Dorsolateral prefrontal cortex (tissue), 120 donors: ENCODE measurements at regions of chr13 and their contacts with region 1.

Region 1: GRCh38 chr13:46698910-46699460 is 98.0 kb downstream of the ESD start:
- DNase-seq: no peak
- H3K4me3 ChIP-seq: no peak overlapping the region
- H3K27ac ChIP-seq: no peak overlapping the region
- H3K27me3 ChIP-seq: no peaks in the 10 kb centered on the region
- CTCF ChIP-seq: no peak

Region 2: GRCh38 chr13:45941261-45941660 is 757.7 kb before region 1 on chr13:
- intact Hi-C with region 1: no loop called
- DNase-seq: no peak
- H3K4me3 ChIP-seq: no peak overlapping the region
- H3K27ac ChIP-seq: no peak overlapping the region
- H3K27me3 ChIP-seq: peaks cover 0 to 3% (median 0%) of the 10 kb centered on the region in 45 donors
- CTCF ChIP-seq: no peak

Region 3: GRCh38 chr13:46648166-46648635 is 50.8 kb before region 1 on chr13:
- intact Hi-C with region 1: no loop called
- DNase-seq: no peak
- H3K4me3 ChIP-seq: no peak overlapping the region
- H3K27ac ChIP-seq: no peak overlapping the region
- H3K27me3 ChIP-seq: no peaks in the 10 kb centered on the region
- CTCF ChIP-seq: no peak

Region 4: DNA sequence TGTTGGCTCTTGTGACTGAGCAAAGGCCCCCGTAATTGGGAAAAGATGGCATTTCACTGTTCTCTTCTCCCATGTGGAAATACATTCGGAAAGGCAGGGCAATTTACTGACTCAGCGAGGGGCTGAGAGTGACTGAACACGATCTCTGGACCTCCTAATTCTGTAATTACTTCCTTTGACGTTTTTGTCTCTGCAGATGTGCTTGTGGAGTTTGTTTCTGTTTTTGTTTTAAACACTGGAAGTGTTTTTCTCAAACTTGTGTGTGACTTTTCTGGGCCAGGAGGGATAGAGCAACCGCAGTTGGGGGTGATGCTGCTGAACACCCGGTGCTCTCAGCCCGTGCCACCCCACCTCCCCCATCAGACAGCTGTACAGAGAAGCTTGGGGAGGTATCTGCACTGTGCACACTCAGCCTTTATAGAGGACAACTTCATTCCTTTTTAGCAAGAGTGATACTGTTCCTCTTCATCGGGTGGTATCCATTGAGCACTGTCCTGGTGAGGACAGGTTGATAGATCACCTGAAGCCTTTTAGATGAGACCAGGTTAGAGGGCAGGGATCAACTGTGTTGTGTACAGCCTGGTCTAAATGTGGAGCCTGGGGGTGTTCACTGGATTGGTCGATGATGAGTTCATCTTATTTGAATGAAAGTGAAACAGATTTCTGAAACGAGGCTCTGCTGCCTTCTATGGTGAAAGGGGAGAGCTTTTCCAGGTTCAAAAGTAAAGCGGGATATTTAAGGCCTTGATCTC is 19.4 kb before region 1 on chr13:
- intact Hi-C with region 1: loop called in 1 of 2 experiments (anchors 2 kb)
- DNase-seq: no peak
- H3K4me3 ChIP-seq: peak overlapping the region in 52 of 59 donors; percentile 5 to 61 (median 35)
- H3K27ac ChIP-seq: peak overlapping the region in 29 of 59 donors; percentile 4 to 78 (median 36)
- H3K27me3 ChIP-seq: no peaks in the 10 kb centered on the region
- CTCF ChIP-seq: no peak